Naive thymus-derived CD4-positive, alpha-beta T cell (primary cell): ENCODE measurements at regions of chr19 and their contacts with region 1.

Region 1: DNA sequence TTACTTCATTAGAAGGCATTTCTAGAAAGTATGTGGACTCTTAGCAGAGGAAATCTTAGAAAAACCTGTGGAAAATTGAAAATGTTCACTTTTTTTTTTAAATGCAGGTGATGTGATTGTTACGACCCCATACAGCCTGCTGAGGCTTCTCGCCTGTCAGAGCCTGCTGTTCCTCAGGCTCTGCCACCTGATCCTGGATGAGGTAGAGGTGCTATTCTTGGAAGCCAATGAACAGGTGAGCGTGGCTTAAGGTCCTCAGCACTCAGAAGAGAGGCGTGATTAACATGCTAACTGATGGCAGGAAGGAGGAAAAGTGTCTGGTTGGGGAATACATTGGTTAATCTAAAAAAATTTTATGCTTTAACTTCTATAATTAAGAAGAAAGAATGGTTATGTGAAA is 71.4 kb downstream of the SLC7A9 start:
- DNase-seq: no peak
- ATAC-seq: no peak
- H3K4me3 ChIP-seq: no peak overlapping the region
- H3K4me3 Mint-ChIP-seq: no peak overlapping the region
- H3K27ac ChIP-seq: no peak overlapping the region
- H3K27ac Mint-ChIP-seq: peak overlapping the region in 1 of 9 donors; percentile 10
- H3K4me1 ChIP-seq: peaks cover 21 to 42% of the 10 kb centered on the region in 2 donors
- H3K4me1 Mint-ChIP-seq: peaks cover 26 to 82% (median 69%) of the 10 kb centered on the region in 7 donors
- H3K27me3 ChIP-seq: no peaks in the 10 kb centered on the region
- H3K27me3 Mint-ChIP-seq: peaks cover 0 to 5% (median 0%) of the 10 kb centered on the region in 5 donors

Region 2: DNA sequence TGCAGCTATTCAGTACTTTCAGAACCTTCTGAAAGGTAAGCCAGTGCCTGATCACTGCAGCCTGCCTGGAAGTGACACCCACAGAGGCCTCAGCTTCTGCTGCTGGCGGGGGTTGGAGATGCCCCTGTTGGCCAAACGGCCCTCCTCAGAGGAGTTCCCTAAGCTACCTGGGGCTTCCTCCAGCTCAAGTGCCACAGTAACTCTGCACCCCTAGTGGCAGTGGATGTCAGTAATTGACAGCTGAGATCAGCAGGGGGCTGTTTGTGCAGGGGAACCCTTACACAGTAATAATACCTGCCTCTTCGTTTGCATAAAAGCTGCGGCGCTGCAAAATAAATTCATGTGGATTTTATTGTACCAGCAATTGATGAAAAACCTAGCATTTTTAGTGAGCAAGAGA is 49.7 kb before region 1 on chr19:
- CTCF ChIA-PET with region 1: no interaction called
- POLR2A ChIA-PET with region 1: no interaction called
- intact Hi-C with region 1: loop called (anchors 1 to 2 kb)
- DNase-seq: peak in 6 of 9 donors; percentile 19 to 41 (median 30)
- ATAC-seq: no peak
- H3K4me3 ChIP-seq: no peak overlapping the region
- H3K4me3 Mint-ChIP-seq: peak overlapping the region in 1 of 10 donors; percentile 23
- H3K27ac ChIP-seq: no peak overlapping the region
- H3K27ac Mint-ChIP-seq: no peak overlapping the region
- H3K4me1 ChIP-seq: peaks cover 5 to 35% of the 10 kb centered on the region in 2 donors
- H3K4me1 Mint-ChIP-seq: peaks cover 0 to 19% (median 7%) of the 10 kb centered on the region in 7 donors
- H3K27me3 ChIP-seq: peaks cover 0 to 3% of the 10 kb centered on the region in 2 donors
- H3K27me3 Mint-ChIP-seq: peaks cover 7 to 22% (median 16%) of the 10 kb centered on the region in 5 donors

Region 3: GRCh38 chr19:32809254-32809653 is 11.1 kb after region 1 on chr19:
- CTCF ChIA-PET with region 1: interaction called, 3 read pairs
- POLR2A ChIA-PET with region 1: interaction called, 5 read pairs
- intact Hi-C with region 1: loop called in 1 of 2 experiments (anchors 1 kb)
- DNase-seq: no peak
- ATAC-seq: no peak
- H3K4me3 ChIP-seq: no peak overlapping the region
- H3K4me3 Mint-ChIP-seq: peak overlapping the region in 9 of 10 donors; percentile 35 to 75 (median 64)
- H3K27ac ChIP-seq: no peak overlapping the region
- H3K27ac Mint-ChIP-seq: peak overlapping the region in 7 of 9 donors; percentile 12 to 91 (median 66)
- H3K4me1 ChIP-seq: peaks cover 0 to 7% of the 10 kb centered on the region in 2 donors
- H3K4me1 Mint-ChIP-seq: peaks cover 6 to 38% (median 31%) of the 10 kb centered on the region in 7 donors
- H3K27me3 ChIP-seq: no peaks in the 10 kb centered on the region
- H3K27me3 Mint-ChIP-seq: peaks cover 0 to 7% (median 0%) of the 10 kb centered on the region in 5 donors

Region 4: DNA sequence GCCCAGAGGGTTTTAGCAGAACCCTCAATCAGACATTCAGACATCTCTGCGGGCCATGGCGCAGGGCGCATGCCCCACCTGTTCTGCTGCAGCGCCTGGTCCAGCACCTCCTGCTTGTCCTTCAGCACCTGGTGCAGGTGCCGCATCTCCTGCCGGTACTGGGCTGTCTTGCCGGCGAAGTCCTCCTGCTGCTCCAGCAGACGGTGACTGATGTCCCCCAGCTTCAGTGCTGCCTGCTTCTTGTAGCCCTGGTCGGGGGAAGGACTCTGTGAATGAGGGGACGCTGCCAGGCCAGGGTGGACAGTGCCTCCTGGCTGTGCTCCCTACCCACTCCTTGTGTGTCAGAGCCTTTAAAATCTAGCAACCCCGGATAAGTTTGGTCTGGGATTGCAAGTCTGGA is 83.6 kb after region 1 on chr19:
- CTCF ChIA-PET with region 1: no interaction called
- POLR2A ChIA-PET with region 1: no interaction called
- intact Hi-C with region 1: loop called in 1 of 2 experiments (anchors 10 kb)
- DNase-seq: no peak
- ATAC-seq: no peak
- H3K4me3 ChIP-seq: no peak overlapping the region
- H3K4me3 Mint-ChIP-seq: no peak overlapping the region
- H3K27ac ChIP-seq: no peak overlapping the region
- H3K27ac Mint-ChIP-seq: no peak overlapping the region
- H3K4me1 ChIP-seq: no peaks in the 10 kb centered on the region
- H3K4me1 Mint-ChIP-seq: peaks cover 0 to 4% (median 0%) of the 10 kb centered on the region in 7 donors
- H3K27me3 ChIP-seq: no peaks in the 10 kb centered on the region
- H3K27me3 Mint-ChIP-seq: no peaks in the 10 kb centered on the region

Region 5: GRCh38 chr19:32902448-32902847 is 104.2 kb after region 1 on chr19:
- CTCF ChIA-PET with region 1: no interaction called
- POLR2A ChIA-PET with region 1: no interaction called
- intact Hi-C with region 1: no loop called
- DNase-seq: no peak
- ATAC-seq: no peak
- H3K4me3 ChIP-seq: no peak overlapping the region
- H3K4me3 Mint-ChIP-seq: no peak overlapping the region
- H3K27ac ChIP-seq: no peak overlapping the region
- H3K27ac Mint-ChIP-seq: no peak overlapping the region
- H3K4me1 ChIP-seq: no peaks in the 10 kb centered on the region
- H3K4me1 Mint-ChIP-seq: no peaks in the 10 kb centered on the region
- H3K27me3 ChIP-seq: no peaks in the 10 kb centered on the region
- H3K27me3 Mint-ChIP-seq: no peaks in the 10 kb centered on the region

Region 6: DNA sequence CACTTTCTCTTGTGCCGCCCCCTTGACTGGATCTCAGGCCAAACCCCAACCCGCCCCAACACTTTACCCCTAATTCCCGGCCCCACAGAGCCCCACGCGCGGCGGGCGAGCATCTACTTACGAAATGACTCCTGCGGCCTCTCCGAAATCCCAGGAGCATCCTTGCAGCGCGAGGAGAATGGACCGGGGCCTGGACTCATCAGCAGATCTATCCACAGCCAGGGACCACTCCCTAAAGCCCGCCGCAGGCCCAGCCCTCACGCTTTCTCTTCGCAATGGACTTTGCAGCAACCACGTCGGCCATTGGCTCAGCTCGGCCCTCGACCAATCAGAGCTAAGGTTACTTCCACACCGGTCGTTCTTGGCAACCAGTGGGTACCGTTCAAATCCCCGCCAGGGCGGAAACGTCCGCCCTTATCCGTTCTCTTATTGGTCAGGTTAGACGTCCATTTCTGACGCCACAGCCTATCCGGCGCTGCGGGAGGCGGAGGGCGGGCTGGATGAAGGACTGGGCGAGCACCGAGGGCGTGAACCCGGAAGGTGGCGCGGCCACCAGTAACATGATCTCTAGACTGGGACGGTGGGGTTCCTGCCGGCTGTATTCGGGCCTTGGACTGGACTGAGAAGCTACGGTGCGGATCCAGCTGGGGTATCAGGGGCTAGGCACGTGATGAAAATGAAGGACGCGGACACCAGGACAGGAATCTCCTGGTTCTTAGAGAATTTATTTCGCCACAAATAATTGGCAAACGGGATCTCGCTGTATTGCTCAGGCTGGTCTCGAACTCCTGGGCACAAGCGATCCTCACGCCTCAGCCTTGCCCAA is 173.7 kb after region 1 on chr19 and contains the starts of genes CEP89 and FAAP24:
- CTCF ChIA-PET with region 1: no interaction called
- POLR2A ChIA-PET with region 1: no interaction called
- intact Hi-C with region 1: loop called (anchors 1 to 10 kb)
- DNase-seq: peak; percentile 89 to 99 (median 98)
- ATAC-seq: peak; percentile 98
- H3K4me3 ChIP-seq: peak within 1 kb of the TSS; percentile 78
- H3K4me3 Mint-ChIP-seq: peak within 1 kb of the TSS; percentile 96 to 100 (median 99)
- H3K27ac ChIP-seq: peak within 1 kb of the TSS; percentile 75
- H3K27ac Mint-ChIP-seq: peak within 1 kb of the TSS; percentile 92 to 97 (median 97)
- H3K4me1 ChIP-seq: peaks cover 0 to 5% of the 10 kb centered on the region in 2 donors
- H3K4me1 Mint-ChIP-seq: peaks cover 14 to 27% (median 20%) of the 10 kb centered on the region in 7 donors
- H3K27me3 ChIP-seq: no peaks in the 10 kb centered on the region
- H3K27me3 Mint-ChIP-seq: no peaks in the 10 kb centered on the region
- total RNA-seq, gene CEP89: 7.4 to 22.4 (median 20.1) TPM
- total RNA-seq, gene FAAP24: 0.71 to 7.2 (median 2.5) TPM